Ascending aorta (tissue), 2 donors: ENCODE measurements at regions of chr4 and their contacts with region 1.

Region 1: DNA sequence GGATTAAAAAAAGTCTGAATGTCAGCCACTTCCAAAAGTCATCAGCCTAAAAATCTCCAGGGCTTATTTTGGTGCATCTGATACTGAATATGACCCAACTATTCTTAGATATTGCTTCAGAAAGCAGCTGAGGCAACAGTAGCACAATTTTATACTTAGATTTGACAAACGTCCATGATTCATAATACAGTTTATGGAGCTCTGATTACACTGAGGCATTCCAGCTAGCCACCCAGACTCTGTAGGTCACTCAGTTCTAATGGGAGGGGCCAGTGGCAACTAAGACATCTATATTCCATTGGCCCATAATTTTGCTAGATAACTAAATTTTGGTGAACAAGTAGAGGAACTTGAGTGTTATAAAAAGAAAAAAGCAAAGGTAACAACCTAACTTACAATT is 10.3 kb downstream of the SPATA4 start:
- DNase-seq: no peak
- H3K4me3 ChIP-seq: no peak overlapping the region
- H3K27ac ChIP-seq: peak overlapping the region in 1 of 2 donors; percentile 79
- H3K4me1 ChIP-seq: peaks cover 0 to 8% of the 10 kb centered on the region in 2 donors
- H3K27me3 ChIP-seq: no peaks in the 10 kb centered on the region
- CTCF ChIP-seq: no peak

Region 2: DNA sequence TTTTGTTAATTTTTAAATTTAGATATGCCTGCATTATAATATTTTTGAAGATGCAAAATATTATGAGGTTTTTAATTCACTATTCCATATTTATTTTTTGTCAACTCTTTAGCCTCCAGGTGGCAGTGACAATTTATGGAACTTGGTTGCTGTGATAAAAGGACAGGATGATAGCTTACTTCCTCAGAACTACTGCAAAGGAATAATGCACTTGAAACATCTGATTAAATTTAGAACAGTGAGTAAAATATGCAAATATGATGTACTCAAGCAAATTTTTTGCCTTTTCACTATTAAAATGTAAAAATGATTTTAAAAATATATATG is 34.7 kb before region 1 on chr4:
- intact Hi-C with region 1: loop called (anchors 5 kb)
- DNase-seq: no peak
- H3K4me3 ChIP-seq: no peak overlapping the region
- H3K27ac ChIP-seq: no peak overlapping the region
- H3K4me1 ChIP-seq: no peaks in the 10 kb centered on the region
- H3K27me3 ChIP-seq: no peaks in the 10 kb centered on the region
- CTCF ChIP-seq: peak in 1 of 3 experiments; percentile 54

Region 3: DNA sequence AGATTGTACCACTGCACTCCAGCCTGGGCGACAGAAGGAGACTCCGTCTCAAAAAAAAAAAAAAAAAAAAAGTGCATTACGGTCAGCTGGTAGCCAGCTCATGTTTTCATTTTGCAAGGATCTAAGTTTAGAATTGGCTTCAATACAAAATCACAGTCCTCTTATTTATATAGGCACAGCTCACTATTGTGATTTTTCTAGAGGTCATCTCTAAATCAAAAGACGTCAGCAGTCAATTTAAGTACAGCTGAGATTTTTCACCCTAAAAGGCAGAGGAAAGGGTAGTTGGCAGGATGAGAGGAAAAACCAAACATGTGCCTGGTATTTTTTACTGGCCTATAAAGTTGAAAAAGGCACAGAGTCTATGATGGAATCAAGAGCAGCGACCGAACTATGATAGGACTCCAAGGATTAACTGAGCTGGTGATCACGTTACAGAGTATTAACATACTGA is 53.1 kb after region 1 on chr4:
- intact Hi-C with region 1: loop called (anchors 2 kb)
- DNase-seq: no peak
- H3K4me3 ChIP-seq: no peak overlapping the region
- H3K27ac ChIP-seq: peak overlapping the region; percentile 78 to 85
- H3K4me1 ChIP-seq: no peaks in the 10 kb centered on the region
- H3K27me3 ChIP-seq: no peaks in the 10 kb centered on the region
- CTCF ChIP-seq: no peak